ENCODE measurements at regions of chr14 and their contacts with region 1.

Region 1: GRCh38 chr14:49633640-49634546 is 1.2 kb downstream of the DNAAF2 start:
- DNase-seq: peak; percentile 97
- H3K4me3 ChIP-seq: peak overlapping the region; percentile 73 to 85 (median 81)
- H3K27ac ChIP-seq: peak overlapping the region; percentile 92 to 97 (median 94)
- H3K4me1 ChIP-seq: peaks cover 28 to 66% (median 49%) of the 10 kb centered on the region in 4 donors
- H3K27me3 ChIP-seq: no peaks in the 10 kb centered on the region
- CTCF ChIP-seq: peak; percentile 79 to 85 (median 85)
- EP300 ChIP-seq: no peak
- POLR2A ChIP-seq: peak; percentile 76

Region 2: GRCh38 chr14:49420201-49420600 is 213.7 kb before region 1 on chr14:
- intact Hi-C with region 1: no loop called
- DNase-seq: no peak
- H3K4me3 ChIP-seq: no peak overlapping the region
- H3K27ac ChIP-seq: no peak overlapping the region
- H3K4me1 ChIP-seq: no peaks in the 10 kb centered on the region
- H3K27me3 ChIP-seq: no peaks in the 10 kb centered on the region
- CTCF ChIP-seq: no peak
- EP300 ChIP-seq: no peak
- POLR2A ChIP-seq: no peak

Region 3: GRCh38 chr14:49598485-49599300 is 35.2 kb before region 1 on chr14 and contains the start of gene LRR1:
- intact Hi-C with region 1: loop called (anchors 5 kb)
- DNase-seq: peak; percentile 95
- H3K4me3 ChIP-seq: peak within 1 kb of the TSS; percentile 80 to 96 (median 86)
- H3K27ac ChIP-seq: peak within 1 kb of the TSS; percentile 95 to 98 (median 97)
- H3K4me1 ChIP-seq: peaks cover 0 to 23% (median 21%) of the 10 kb centered on the region in 4 donors
- H3K27me3 ChIP-seq: no peaks in the 10 kb centered on the region
- CTCF ChIP-seq: no peak
- EP300 ChIP-seq: peak; percentile 5
- POLR2A ChIP-seq: no peak
- total RNA-seq, gene LRR1: 8.6 to 17.8 (median 10.3) TPM

Region 4: GRCh38 chr14:49692811-49693734 is 59.2 kb after region 1 on chr14 and contains the start of gene KLHDC1:
- intact Hi-C with region 1: loop called (anchors 5 kb)
- DNase-seq: peak; percentile 95
- H3K4me3 ChIP-seq: peak within 1 kb of the TSS; percentile 70 to 92 (median 83)
- H3K27ac ChIP-seq: peak within 1 kb of the TSS; percentile 93 to 99 (median 98)
- H3K4me1 ChIP-seq: peaks cover 14 to 24% (median 20%) of the 10 kb centered on the region in 4 donors
- H3K27me3 ChIP-seq: no peaks in the 10 kb centered on the region
- CTCF ChIP-seq: no peak
- EP300 ChIP-seq: no peak
- POLR2A ChIP-seq: peak; percentile 76
- total RNA-seq, gene KLHDC1: 7.6 to 8.3 (median 8.0) TPM

Region 5: DNA sequence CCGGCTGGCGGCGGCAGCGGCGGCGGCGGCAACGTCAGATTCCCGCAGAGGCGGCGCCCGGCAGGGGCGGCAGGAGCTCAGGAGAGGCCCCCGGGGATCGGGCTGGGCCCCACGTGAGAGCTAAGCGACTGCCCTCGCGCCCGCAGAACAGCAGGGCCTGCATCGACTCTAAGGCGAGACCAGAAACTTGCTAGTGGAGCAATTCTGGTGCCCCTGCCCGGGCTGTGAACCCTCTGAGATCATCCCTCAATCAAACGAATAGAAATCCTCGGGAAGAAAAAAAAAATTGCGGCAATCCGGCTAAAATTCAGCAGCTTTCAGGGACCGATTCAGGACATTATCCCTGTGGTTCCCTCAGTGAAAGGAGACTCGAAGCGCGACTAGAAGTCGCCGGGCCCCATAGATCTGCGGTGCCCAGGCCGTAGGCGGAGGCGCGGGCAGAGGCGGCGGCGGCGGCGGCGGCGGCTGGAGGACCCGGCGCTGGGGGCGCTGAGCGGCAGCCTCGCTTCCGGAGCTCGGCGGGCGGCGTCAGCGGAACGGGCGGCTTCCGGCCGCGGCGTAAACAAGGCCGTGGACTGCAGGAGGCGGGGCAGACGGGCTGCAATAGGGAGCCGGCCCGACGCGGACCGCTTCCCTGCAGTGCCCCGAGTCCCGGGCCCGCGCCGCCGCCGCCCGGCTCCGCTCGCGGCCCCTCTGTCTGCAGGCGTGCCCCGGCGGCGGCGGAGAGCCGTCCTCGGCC is 133.8 kb after region 1 on chr14 and contains the start of gene KLHDC2:
- intact Hi-C with region 1: loop called (anchors 5 kb)
- DNase-seq: peak; percentile 93
- H3K4me3 ChIP-seq: peak within 1 kb of the TSS; percentile 91 to 97 (median 96)
- H3K27ac ChIP-seq: peak within 1 kb of the TSS; percentile 93 to 99 (median 98)
- H3K4me1 ChIP-seq: peaks cover 24 to 37% (median 32%) of the 10 kb centered on the region in 4 donors
- H3K27me3 ChIP-seq: no peaks in the 10 kb centered on the region
- CTCF ChIP-seq: peak; percentile 39 to 53 (median 44)
- EP300 ChIP-seq: no peak
- POLR2A ChIP-seq: peak; percentile 47
- total RNA-seq, gene KLHDC2: 72.2 to 102 (median 85.8) TPM

Region 6: GRCh38 chr14:49852301-49853157 is 218.6 kb after region 1 on chr14 and contains the start of gene NEMF:
- intact Hi-C with region 1: loop called (anchors 5 kb)
- DNase-seq: peak; percentile 96
- H3K4me3 ChIP-seq: peak within 1 kb of the TSS; percentile 69 to 92 (median 78)
- H3K27ac ChIP-seq: peak within 1 kb of the TSS; percentile 87 to 93 (median 88)
- H3K4me1 ChIP-seq: peaks cover 19 to 41% (median 35%) of the 10 kb centered on the region in 4 donors
- H3K27me3 ChIP-seq: no peaks in the 10 kb centered on the region
- CTCF ChIP-seq: peak; percentile 72 to 81 (median 76)
- EP300 ChIP-seq: no peak
- POLR2A ChIP-seq: peak; percentile 49
- total RNA-seq, gene NEMF: 40.6 to 71.0 (median 56.4) TPM

Region 7: GRCh38 chr14:50116181-50116956 is 482.5 kb after region 1 on chr14 and contains the start of gene VCPKMT:
- intact Hi-C with region 1: loop called (anchors 10 kb)
- DNase-seq: peak; percentile 97
- H3K4me3 ChIP-seq: peak within 1 kb of the TSS; percentile 64 to 76 (median 76)
- H3K27ac ChIP-seq: peak within 1 kb of the TSS; percentile 86 to 89 (median 86)
- H3K4me1 ChIP-seq: peaks cover 15 to 28% (median 23%) of the 10 kb centered on the region in 4 donors
- H3K27me3 ChIP-seq: no peaks in the 10 kb centered on the region
- CTCF ChIP-seq: no peak
- EP300 ChIP-seq: no peak
- POLR2A ChIP-seq: peak; percentile 82
- total RNA-seq, gene VCPKMT: 3.1 to 5.4 (median 4.8) TPM

Measured in esophagus muscularis mucosa (tissue), 4 donors.